ENCODE measurements at regions of chr4 and their contacts with region 1.

Region 1: GRCh38 chr4:53520116-53520515 is 71.2 kb downstream of the LNX1 start:
- DNase-seq: no peak
- H3K4me3 ChIP-seq: no peak overlapping the region
- H3K27ac ChIP-seq: no peak overlapping the region
- H3K4me1 ChIP-seq: no peaks in the 10 kb centered on the region
- CTCF ChIP-seq: no peak

Region 2: DNA sequence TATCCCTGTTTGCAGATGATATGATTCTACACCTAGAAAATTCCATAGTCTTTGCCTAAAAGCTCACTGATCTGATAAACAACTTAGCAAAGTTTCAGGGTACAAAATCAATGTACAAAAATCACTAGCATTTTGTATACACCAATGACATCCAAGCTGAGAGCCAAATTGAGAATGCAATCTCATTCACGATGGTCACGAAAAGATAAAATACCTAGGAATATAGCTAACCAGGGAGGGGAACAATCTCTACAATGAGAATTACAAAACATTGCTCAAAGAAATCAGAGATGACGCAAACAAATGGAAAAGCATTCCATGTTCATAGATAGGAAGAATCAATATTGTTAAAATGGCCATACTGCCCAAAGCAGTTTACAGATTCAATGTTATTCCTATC is 87.1 kb after region 1 on chr4:
- CTCF ChIA-PET with region 1: no interaction called
- POLR2A ChIA-PET with region 1: interaction called, 10 read pairs
- intact Hi-C with region 1: no loop called
- DNase-seq: no peak
- H3K4me3 ChIP-seq: no peak overlapping the region
- H3K27ac ChIP-seq: no peak overlapping the region
- H3K4me1 ChIP-seq: no peaks in the 10 kb centered on the region
- CTCF ChIP-seq: no peak